ENCODE measurements at regions of chr11 and their contacts with region 1.

Region 1: GRCh38 chr11:65497141-65498041 is 1.5 kb upstream of the MALAT1 start:
- DNase-seq: peak; percentile 98
- H3K4me3 Mint-ChIP-seq: no peak overlapping the region
- H3K27ac Mint-ChIP-seq: no peak overlapping the region
- H3K4me1 Mint-ChIP-seq: peaks cover 38% of the 10 kb centered on the region
- H3K27me3 Mint-ChIP-seq: no peaks in the 10 kb centered on the region

Region 2: GRCh38 chr11:65261591-65262380 is 235.6 kb before region 1 on chr11 and contains the start of gene POLA2:
- CTCF ChIA-PET with region 1: no interaction called
- POLR2A ChIA-PET with region 1: interaction called, 32 read pairs
- DNase-seq: peak; percentile 96
- H3K4me3 Mint-ChIP-seq: peak within 1 kb of the TSS; percentile 95
- H3K27ac Mint-ChIP-seq: peak within 1 kb of the TSS; percentile 92
- H3K4me1 Mint-ChIP-seq: peaks cover 60% of the 10 kb centered on the region
- H3K27me3 Mint-ChIP-seq: no peaks in the 10 kb centered on the region
- total RNA-seq, gene POLA2: 42.0 to 51.1 TPM

Region 3: DNA sequence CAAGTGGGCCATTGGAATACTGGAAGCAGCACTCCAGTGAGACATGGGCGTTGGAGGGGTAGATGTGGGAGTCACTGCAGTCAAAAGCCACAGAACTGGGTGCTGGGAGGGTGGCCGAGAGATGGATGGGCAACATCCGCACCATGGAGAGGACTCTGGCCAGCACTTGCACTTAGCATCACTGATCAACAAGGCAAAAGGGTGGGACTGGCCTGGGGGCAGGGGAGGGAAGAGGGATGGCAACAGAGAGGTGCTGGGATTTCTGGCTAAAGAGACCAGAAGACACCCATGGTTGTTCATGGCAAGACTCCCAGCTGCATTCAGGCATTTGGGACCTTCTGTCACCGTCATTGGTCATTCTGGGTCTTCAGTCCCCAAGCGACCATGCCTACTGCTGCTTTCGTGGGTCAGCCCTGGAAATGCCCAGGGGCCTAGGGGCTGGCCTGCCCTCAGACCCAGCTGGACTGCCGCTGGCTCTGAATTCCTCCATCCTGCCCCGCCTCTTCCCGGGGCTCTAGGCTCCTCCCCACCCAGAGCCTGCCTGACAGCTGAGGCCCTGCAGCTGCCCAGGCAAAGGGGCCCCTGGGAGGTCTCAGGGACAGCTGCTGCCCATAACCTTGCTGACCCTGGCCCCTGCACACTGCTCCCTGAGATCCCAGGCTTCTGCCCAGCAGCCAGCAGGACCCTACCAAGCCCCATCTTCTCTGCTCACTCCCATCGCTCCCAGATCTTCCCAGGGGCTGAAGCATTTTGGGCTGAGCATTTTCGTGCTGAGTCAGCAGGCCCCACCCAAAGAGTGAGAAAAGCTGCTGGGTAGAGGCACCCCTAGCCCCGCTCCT is 195.7 kb before region 1 on chr11:
- CTCF ChIA-PET with region 1: no interaction called
- POLR2A ChIA-PET with region 1: no interaction called
- DNase-seq: no peak
- H3K4me3 Mint-ChIP-seq: no peak overlapping the region
- H3K27ac Mint-ChIP-seq: no peak overlapping the region
- H3K4me1 Mint-ChIP-seq: no peaks in the 10 kb centered on the region
- H3K27me3 Mint-ChIP-seq: no peaks in the 10 kb centered on the region

Region 4: DNA sequence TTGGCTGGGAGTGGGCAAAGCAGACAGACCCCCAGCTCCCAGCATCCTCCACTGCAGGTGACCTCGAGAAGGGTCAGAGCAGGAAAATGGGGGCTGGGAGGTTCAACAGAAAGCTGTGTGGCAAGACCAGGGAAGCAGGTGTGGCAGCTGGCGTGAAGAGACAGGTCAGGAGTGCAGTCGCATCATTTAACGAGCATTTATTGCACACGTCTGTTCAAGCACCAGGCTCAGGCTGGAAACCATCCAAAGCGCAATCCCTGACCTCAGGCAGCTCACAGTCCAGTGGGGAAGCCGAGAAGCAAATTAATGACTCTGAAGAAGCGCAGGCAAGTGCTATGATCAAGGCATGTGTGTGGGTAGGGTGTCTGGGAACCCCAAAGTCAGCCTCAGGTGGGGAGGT is 122.4 kb before region 1 on chr11:
- CTCF ChIA-PET with region 1: no interaction called
- POLR2A ChIA-PET with region 1: interaction called, 443 read pairs
- DNase-seq: no peak
- H3K4me3 Mint-ChIP-seq: no peak overlapping the region
- H3K27ac Mint-ChIP-seq: no peak overlapping the region
- H3K4me1 Mint-ChIP-seq: peaks cover under 1% of the 10 kb centered on the region
- H3K27me3 Mint-ChIP-seq: peaks cover 1% of the 10 kb centered on the region

Region 5: GRCh38 chr11:65429724-65430405 is 67.5 kb before region 1 on chr11:
- CTCF ChIA-PET with region 1: interaction called, 447 read pairs
- POLR2A ChIA-PET with region 1: interaction called, 6,840 read pairs
- DNase-seq: peak; percentile 67
- H3K4me3 Mint-ChIP-seq: peak overlapping the region; percentile 97
- H3K27ac Mint-ChIP-seq: peak overlapping the region; percentile 99
- H3K4me1 Mint-ChIP-seq: peaks cover 81% of the 10 kb centered on the region
- H3K27me3 Mint-ChIP-seq: no peaks in the 10 kb centered on the region

Region 6: GRCh38 chr11:65459552-65459951 is 37.8 kb before region 1 on chr11:
- CTCF ChIA-PET with region 1: no interaction called
- POLR2A ChIA-PET with region 1: interaction called, 28 read pairs
- DNase-seq: no peak
- H3K4me3 Mint-ChIP-seq: no peak overlapping the region
- H3K27ac Mint-ChIP-seq: no peak overlapping the region
- H3K4me1 Mint-ChIP-seq: peaks cover 28% of the 10 kb centered on the region
- H3K27me3 Mint-ChIP-seq: peaks cover 1% of the 10 kb centered on the region

Region 7: DNA sequence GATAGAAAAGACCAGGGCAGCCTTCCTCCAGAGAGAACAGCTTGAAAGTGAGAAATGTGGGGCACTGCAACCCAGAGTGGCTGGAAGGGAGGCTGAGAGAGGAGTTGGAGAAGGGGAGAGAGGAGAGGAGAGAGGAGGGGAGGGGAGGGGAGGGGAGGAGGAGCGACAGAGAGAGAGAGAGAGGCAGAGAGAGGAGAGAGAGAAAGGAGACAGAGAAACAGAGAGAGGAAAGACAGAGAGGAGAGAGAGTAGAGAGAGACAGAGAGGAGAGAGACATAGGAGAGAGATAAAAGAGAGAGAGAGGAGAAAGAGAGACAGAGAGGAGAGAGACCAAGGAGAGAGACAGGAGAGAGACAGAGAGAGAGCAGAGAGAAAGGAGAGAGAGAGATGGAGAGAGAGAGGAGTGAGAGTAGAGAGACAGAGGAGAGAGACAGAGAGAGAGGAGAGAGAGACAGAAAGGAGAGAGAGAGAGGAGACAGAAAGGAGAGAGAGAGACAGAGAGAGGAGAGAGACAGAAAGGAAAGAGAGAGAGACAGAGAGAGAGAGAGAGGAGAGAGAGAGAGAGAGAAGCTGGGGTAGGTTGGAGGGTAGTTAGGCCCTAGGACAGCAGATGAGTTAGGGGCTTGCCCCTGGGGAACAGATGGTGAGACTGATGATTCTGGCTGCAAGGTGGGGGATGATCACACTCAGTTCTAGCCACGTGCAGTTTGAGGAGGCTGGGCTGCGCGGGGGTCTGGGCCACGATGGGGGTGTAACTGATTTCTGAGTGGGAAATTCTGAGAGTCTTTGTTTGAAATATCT is 18.9 kb after region 1 on chr11:
- CTCF ChIA-PET with region 1: interaction called, 51 read pairs
- POLR2A ChIA-PET with region 1: interaction called, 1,583 read pairs
- DNase-seq: no peak
- H3K4me3 Mint-ChIP-seq: no peak overlapping the region
- H3K27ac Mint-ChIP-seq: no peak overlapping the region
- H3K4me1 Mint-ChIP-seq: peaks cover 6% of the 10 kb centered on the region
- H3K27me3 Mint-ChIP-seq: peaks cover 5% of the 10 kb centered on the region

Region 8: GRCh38 chr11:65569973-65570918 is 72.9 kb after region 1 on chr11 and contains the start of gene ZNRD2:
- CTCF ChIA-PET with region 1: no interaction called
- POLR2A ChIA-PET with region 1: interaction called, 53 read pairs
- DNase-seq: peak; percentile 99
- H3K4me3 Mint-ChIP-seq: peak within 1 kb of the TSS; percentile 100
- H3K27ac Mint-ChIP-seq: peak within 1 kb of the TSS; percentile 99
- H3K4me1 Mint-ChIP-seq: peaks cover 71% of the 10 kb centered on the region
- H3K27me3 Mint-ChIP-seq: no peaks in the 10 kb centered on the region
- total RNA-seq, gene ZNRD2: 25.3 to 27.8 TPM

Region 9: DNA sequence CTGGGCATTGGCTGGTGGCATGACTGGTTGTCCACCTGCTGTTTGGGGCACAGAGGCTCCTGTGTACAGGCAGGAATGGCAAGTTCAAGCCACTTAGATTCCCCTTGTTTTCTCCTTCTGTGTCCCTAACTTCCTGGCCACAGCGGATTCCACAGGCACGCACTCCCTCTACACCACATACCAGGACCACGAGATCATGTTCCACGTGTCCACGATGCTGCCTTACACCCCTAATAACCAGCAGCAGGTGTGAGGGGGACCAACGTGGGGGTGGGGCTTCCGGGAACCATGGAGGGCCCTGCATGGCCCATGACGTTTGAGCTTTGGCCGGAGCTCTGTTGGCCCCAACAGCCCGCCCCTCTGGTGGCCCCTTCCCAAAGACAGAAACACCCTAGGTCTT is 148.3 kb after region 1 on chr11:
- CTCF ChIA-PET with region 1: no interaction called
- POLR2A ChIA-PET with region 1: no interaction called
- DNase-seq: no peak
- H3K4me3 Mint-ChIP-seq: no peak overlapping the region
- H3K27ac Mint-ChIP-seq: no peak overlapping the region
- H3K4me1 Mint-ChIP-seq: peaks cover 30% of the 10 kb centered on the region
- H3K27me3 Mint-ChIP-seq: no peaks in the 10 kb centered on the region

Region 10: DNA sequence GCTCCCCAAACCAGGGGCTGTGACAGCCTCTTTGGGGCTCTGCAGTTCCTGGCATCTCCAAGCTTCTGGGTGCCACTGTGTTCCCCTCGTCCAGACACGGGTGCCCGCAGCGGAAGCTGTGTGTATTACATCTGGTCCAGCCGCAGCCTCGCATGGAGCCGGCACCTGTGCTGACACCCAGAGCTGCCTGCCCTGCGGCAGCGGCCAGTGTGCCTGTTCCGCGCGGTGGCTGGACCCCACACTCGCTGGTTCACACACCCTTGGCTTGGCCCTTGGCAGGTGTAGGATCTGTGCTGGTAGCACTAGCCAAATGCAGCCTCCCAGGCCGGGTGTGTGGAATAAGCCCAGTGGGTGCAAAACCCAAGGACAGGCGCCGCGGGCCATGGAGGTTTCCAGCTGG is 247.7 kb after region 1 on chr11:
- CTCF ChIA-PET with region 1: no interaction called
- POLR2A ChIA-PET with region 1: no interaction called
- DNase-seq: no peak
- H3K4me3 Mint-ChIP-seq: no peak overlapping the region
- H3K27ac Mint-ChIP-seq: no peak overlapping the region
- H3K4me1 Mint-ChIP-seq: peaks cover 2% of the 10 kb centered on the region
- H3K27me3 Mint-ChIP-seq: peaks cover 39% of the 10 kb centered on the region